ENCODE measurements at regions of chr17 and their contacts with region 1.

Region 1: GRCh38 chr17:8785547-8786413 is 13.4 kb downstream of the MFSD6L start:
- DNase-seq: peak in 1 of 2 experiments; percentile 70
- H3K4me3 ChIP-seq: no peak overlapping the region
- H3K27ac ChIP-seq: no peak overlapping the region
- H3K4me1 ChIP-seq: no peaks in the 10 kb centered on the region
- H3K27me3 ChIP-seq: peaks cover 37% of the 10 kb centered on the region
- CTCF ChIP-seq: peak; percentile 71

Region 2: GRCh38 chr17:8552577-8553320 is 233.0 kb before region 1 on chr17:
- CTCF ChIA-PET with region 1: no interaction called
- POLR2A ChIA-PET with region 1: interaction called, 30 read pairs
- intact Hi-C with region 1: no loop called
- DNase-seq: no peak
- H3K4me3 ChIP-seq: no peak overlapping the region
- H3K27ac ChIP-seq: no peak overlapping the region
- H3K4me1 ChIP-seq: no peaks in the 10 kb centered on the region
- H3K27me3 ChIP-seq: peaks cover 19% of the 10 kb centered on the region
- CTCF ChIP-seq: no peak

Region 3: DNA sequence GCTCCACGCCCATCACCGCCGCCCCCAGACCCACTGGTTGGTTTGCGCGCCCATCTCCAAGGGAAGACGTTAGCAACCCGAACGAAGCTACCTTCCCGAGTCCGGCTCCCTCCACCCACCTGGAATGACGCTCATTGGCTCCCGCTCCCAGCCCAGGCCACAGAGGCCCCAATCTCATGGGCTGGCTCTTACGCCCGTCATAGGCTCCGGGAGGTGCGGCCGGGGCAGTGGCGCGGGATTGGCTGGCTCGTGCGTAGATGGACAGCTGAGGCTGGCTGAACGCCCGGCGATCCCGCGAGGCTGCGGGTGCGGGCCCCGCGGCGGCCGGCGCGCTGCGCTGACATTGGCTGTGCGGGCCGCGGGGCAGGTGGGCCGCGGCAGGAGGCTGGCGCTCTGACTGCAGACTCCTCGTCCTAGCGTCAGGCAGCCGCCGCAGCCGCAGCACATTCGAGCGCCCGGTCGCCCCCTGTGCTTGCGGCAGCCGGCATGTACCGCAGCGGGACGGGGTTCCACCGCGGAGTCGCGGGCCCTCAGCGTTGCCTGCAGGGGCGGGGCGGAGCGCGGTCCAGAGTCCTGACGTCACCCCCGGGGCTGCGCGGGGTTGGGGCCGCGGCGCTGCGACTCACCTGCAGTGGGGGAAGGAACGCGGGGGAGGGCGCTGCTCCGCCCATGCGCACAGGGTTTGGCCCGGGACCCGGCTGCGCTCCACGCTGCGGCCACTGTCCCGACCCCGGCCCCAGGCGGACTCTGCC is 154.8 kb before region 1 on chr17:
- CTCF ChIA-PET with region 1: no interaction called
- POLR2A ChIA-PET with region 1: no interaction called
- intact Hi-C with region 1: no loop called
- DNase-seq: peak; percentile 49 to 89
- H3K4me3 ChIP-seq: peak overlapping the region; percentile 48; the same call in 1 of the 2 replicates
- H3K27ac ChIP-seq: no peak overlapping the region
- H3K4me1 ChIP-seq: no peaks in the 10 kb centered on the region
- H3K27me3 ChIP-seq: no peaks in the 10 kb centered on the region
- CTCF ChIP-seq: no peak

Region 4: DNA sequence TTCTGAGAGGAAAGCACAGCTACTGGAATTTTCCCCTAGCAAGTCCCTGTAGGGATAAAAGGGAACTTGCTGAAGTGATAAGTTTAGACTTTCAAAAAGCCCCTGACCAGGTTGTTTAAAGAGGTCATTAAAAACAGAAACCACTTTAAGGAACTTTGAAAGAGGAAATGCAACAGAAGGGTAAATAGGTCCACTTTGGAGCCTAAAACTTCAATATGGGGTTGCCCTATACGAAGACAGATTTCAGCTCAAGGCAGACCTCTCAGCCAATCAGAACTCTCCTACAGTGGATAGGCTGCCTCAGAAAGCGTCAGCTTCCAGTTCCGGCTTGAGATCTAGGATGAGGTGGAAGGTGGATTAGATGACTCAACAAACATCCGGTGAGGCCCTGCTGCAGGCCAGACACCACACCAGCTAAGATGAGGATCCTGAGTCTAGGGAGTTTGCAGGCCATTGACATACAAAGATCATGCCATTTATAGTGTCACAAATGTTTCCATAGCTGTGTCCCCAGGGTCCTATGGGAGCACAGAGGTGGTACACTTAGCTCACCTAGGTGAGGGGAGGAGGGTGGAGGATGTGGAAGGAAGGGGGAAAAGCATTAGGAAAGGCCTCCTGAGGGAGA is 21.3 kb after region 1 on chr17:
- CTCF ChIA-PET with region 1: no interaction called
- POLR2A ChIA-PET with region 1: no interaction called
- intact Hi-C with region 1: no loop called
- DNase-seq: no peak
- H3K4me3 ChIP-seq: no peak overlapping the region
- H3K27ac ChIP-seq: no peak overlapping the region
- H3K4me1 ChIP-seq: no peaks in the 10 kb centered on the region
- H3K27me3 ChIP-seq: peaks cover 20% of the 10 kb centered on the region
- CTCF ChIP-seq: no peak